Heart right ventricle (tissue), 16 donors: ENCODE measurements at regions of chr1 and their contacts with region 1.

Region 1: DNA sequence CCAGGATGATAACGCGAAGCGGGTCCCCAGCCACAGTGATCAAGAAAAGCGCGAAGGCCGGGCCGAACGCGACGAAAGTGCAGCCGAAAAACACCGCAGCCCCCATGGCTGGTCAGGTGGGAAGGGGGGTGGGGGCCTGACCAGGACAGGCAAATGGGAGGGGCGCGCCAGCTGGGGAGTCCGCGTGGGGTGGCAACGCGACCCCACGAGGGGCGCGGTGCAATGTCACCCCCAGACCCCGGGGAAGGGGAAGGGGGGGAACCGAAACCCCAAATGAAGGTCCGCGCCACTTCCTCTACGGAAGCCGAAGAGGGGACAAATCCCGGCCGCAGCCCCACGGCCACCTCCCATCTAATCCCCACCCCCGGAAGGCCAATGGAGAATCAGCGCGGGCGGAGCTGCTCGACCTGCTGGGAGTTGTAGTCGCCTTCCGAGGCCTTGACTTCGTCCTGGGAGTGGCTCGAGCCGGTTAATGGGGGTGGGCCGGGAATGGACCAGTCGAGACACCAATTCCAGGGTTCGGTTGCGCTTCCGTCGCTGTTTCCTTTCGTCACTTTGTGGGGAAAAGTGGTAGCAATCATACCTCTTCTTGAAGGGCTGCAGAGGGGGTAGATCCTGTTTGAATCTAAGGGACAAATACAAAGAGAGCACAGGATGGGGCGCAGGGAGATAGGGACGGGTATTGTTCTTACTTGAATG is at the start of gene APH1A:
- DNase-seq: peak; percentile 95 to 98
- ATAC-seq: peak; percentile 96 to 98 (median 97)
- H3K4me3 ChIP-seq: peak within 1 kb of the TSS; percentile 67 to 100 (median 90)
- H3K27ac ChIP-seq: peak within 1 kb of the TSS; percentile 88 to 99 (median 97)
- H3K4me1 ChIP-seq: peaks cover 15 to 54% (median 41%) of the 10 kb centered on the region in 9 donors
- H3K27me3 ChIP-seq: no peaks in the 10 kb centered on the region
- CTCF ChIP-seq: no peak
- total RNA-seq, gene APH1A: 56.6 to 86.9 (median 65.7) TPM

Region 2: DNA sequence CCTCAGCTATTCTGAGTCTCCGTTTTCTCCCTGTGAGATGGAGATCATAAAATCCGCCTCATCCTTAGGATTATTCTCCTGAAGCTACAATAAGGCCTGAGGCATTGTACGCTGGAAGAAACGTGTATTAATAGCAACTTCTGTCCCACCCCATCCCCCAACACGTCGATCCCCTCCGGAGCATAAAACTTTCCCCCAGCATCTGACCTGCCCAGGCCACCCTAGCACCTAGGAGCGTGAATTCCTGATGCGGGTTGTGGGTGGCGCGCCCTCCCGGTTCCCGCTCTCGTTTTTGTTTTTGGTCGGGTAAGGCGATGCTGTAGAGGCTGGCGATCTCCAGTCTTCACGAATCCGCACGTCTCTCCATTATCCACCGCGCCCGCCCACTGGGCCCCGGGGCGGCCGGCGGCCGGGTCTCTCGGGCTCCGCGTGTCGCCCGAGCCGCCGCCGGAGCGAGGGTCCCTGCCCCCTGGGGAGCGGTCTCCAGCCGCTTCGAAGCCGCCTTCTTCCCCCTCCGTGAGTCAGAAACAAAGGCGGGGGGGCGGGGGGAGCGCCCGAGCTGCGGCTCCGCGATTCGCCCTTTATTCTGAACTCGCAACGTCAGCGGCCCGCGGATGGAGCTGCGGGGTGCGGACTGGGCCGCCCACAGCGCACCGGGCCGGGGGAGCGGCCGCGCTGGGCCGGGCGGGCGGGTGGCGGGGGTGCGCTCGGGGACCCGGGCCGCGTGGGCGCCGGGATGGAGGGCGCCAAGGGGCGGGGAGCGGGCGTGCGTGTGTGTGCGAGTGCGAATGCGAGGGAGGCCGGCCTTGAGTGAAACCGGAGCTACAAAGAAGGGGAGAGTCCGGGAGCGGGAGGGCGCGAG is 119.4 kb before region 1 on chr1 and contains the start of gene PLEKHO1:
- intact Hi-C with region 1: no loop called
- DNase-seq: peak; percentile 85 to 90
- ATAC-seq: peak; percentile 70 to 89 (median 82)
- H3K4me3 ChIP-seq: peak within 1 kb of the TSS; percentile 67 to 94 (median 87)
- H3K27ac ChIP-seq: peak within 1 kb of the TSS; percentile 79 to 99 (median 93)
- H3K4me1 ChIP-seq: peaks cover 0 to 66% (median 51%) of the 10 kb centered on the region in 9 donors
- H3K27me3 ChIP-seq: no peaks in the 10 kb centered on the region
- CTCF ChIP-seq: no peak
- total RNA-seq, gene PLEKHO1: 29.3 to 82.3 (median 56.8) TPM

Region 3: GRCh38 chr1:150235852-150236613 is 32.8 kb before region 1 on chr1 and contains the start of gene ANP32E:
- intact Hi-C with region 1: loop called in 1 of 10 experiments (anchors 5 kb)
- DNase-seq: peak; percentile 91 to 97
- ATAC-seq: peak; percentile 95 to 98 (median 97)
- H3K4me3 ChIP-seq: peak within 1 kb of the TSS; percentile 80 to 97 (median 90)
- H3K27ac ChIP-seq: peak within 1 kb of the TSS; percentile 87 to 100 (median 98)
- H3K4me1 ChIP-seq: peaks cover 0 to 20% (median 15%) of the 10 kb centered on the region in 9 donors
- H3K27me3 ChIP-seq: no peaks in the 10 kb centered on the region
- CTCF ChIP-seq: peak in 2 of 9 donors; percentile 7 to 25
- total RNA-seq, gene ANP32E: 23.7 to 58.2 (median 41.6) TPM

Region 4: DNA sequence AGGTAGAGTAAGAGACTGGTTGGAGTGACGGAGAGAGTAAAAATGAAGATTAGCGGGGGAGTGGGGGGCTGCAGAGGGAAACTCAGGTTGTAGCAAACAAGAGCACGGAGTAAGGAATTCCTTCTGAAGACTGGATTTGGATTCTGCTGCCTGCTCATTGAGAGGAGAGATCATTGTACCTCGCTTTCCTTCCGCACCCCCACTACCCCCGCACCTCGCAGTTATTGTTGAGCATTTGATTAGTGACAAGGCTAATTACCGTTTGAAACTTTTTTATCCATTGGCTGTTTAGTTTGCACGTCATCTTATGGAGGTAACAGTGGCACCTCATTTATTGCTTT is 52.9 kb after region 1 on chr1:
- intact Hi-C with region 1: loop called in 1 of 10 experiments (anchors 5 kb)
- DNase-seq: no peak
- ATAC-seq: peak in 3 of 8 donors; percentile 3 to 16 (median 10)
- H3K4me3 ChIP-seq: peak overlapping the region; percentile 60 to 84 (median 75)
- H3K27ac ChIP-seq: peak overlapping the region; percentile 65 to 95 (median 90)
- H3K4me1 ChIP-seq: peaks cover 0 to 25% (median 13%) of the 10 kb centered on the region in 9 donors
- H3K27me3 ChIP-seq: no peaks in the 10 kb centered on the region
- CTCF ChIP-seq: no peak